Left cardiac atrium (tissue), 4 donors: ENCODE measurements at regions of chr5 and their contacts with region 1.

Region 1: DNA sequence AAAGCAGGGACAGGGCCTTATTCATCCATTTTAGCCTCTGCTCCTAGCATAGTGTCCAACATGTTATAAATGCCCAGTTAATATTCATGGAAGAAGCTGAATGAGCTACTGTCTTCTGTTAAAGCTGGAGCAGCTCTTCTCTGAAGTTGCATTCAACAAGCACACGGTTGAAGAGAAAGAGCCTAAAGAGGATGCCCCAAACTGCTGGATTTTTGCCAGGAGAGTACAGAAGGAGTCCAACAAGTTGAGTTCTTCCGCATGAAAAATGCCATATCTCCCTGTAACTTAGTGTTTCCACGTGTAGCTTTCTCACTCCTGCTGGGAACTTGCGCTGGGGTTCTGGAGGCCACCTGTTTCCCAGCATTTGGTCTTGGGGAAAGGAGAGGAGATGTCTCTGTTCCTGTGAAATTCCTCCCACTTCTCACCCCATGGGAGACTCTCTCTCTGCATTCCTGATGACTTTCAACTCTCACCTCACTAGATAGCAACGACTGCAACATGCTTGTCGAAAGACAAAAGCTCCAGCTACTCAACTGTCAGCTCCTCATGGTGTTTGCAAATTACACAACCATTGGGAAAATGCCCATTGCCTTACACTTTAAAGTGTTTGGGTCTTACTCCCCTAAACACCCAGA is 122.8 kb downstream of the KIF4B start:
- DNase-seq: no peak
- ATAC-seq: peak in 1 of 2 donors; percentile 74

Region 2: GRCh38 chr5:154972476-154973080 is 163.8 kb before region 1 on chr5:
- intact Hi-C with region 1: loop called in 1 of 2 experiments (anchors 5 kb)
- DNase-seq: no peak
- ATAC-seq: peak; percentile 22 to 74

Region 3: GRCh38 chr5:155728146-155728856 is 592.0 kb after region 1 on chr5:
- intact Hi-C with region 1: loop called in 1 of 2 experiments (anchors 2 kb)
- DNase-seq: peak; percentile 73
- ATAC-seq: peak; percentile 72 to 74